ENCODE measurements at regions of chr2 and their contacts with region 1.

Region 1: DNA sequence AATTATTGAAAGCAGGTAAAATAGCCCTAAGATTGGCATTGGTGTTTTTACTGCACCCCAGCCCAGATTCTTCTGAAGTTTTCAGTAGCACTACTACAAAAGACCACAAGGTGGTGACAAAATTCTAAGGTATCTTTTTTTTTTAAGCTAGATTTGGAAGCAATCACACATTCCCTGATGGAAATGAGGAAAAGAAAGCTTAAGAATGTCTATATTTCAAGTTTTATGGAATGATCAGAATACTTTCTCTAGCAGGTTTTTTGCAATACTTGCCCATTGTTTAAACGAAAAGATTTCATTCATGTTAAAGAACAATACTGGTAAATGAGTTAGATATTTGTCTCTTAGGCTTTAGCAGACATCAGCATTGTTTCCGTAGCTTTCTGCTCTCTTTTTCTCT is 32.1 kb upstream of the ZNF638 start:
- DNase-seq: peak; percentile 51
- H3K4me3 ChIP-seq: no peak overlapping the region; a peak in 1 of 4 replicates
- H3K27ac ChIP-seq: no peak overlapping the region
- H3K4me1 ChIP-seq: no peaks in the 10 kb centered on the region
- H3K27me3 ChIP-seq: no peaks in the 10 kb centered on the region
- CTCF ChIP-seq: peak; percentile 78
- EP300 ChIP-seq: no peak
- RAD21 ChIP-seq: peak; percentile 79

Region 2: DNA sequence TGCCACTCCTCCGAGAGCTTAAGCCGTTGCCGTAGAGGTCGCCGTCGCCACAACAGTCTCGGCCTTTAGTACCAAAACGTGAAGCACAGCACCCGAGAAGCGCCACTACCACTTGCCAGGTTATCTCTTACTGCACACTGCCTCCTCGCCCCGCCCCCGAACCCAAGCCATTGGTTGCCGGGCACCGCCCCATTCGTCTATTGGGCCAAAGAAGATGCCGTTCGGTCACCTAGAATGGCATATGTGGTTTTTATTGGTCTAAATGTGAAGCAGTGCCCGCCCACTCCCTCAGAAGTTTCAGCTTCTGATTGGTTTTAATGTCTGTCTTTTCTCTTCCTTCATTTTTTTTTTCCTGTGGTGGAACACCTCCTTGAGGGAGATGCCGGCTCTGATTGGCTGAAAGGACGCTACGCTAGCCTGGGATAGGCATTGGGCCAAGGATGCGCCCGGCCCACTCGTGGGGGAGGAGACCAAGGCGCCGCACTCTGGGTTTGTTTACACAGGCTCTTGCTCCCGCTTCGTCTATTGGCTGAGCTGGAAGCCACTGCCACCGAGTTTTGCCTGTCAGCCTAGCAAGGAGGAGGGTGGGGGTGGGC is 72.4 kb before region 1 on chr2 and contains the start of gene PAIP2B:
- CTCF ChIA-PET with region 1: interaction called, 21 read pairs
- POLR2A ChIA-PET with region 1: no interaction called
- DNase-seq: peak; percentile 90
- H3K4me3 ChIP-seq: peak within 1 kb of the TSS; percentile 80 to 90
- H3K27ac ChIP-seq: peak within 1 kb of the TSS in 1 of 2 experiments; percentile 17; a peak in 1 of 4 replicates
- H3K4me1 ChIP-seq: peaks cover 0 to 4% of the 10 kb centered on the region in 2 experiments; a peak in 1 of 4 replicates
- H3K27me3 ChIP-seq: no peaks in the 10 kb centered on the region
- CTCF ChIP-seq: no peak
- EP300 ChIP-seq: no peak
- RAD21 ChIP-seq: no peak; the same call in 1 of the 2 replicates
- polyA plus RNA-seq, gene PAIP2B: 0.20 and 0.23 TPM in 2 replicates

Region 3: GRCh38 chr2:71282495-71282894 is 17.0 kb before region 1 on chr2:
- CTCF ChIA-PET with region 1: interaction called, 43 read pairs
- POLR2A ChIA-PET with region 1: no interaction called
- DNase-seq: no peak
- H3K4me3 ChIP-seq: no peak overlapping the region
- H3K27ac ChIP-seq: no peak overlapping the region
- H3K4me1 ChIP-seq: peaks cover 0 to 5% of the 10 kb centered on the region in 2 experiments; a peak in 2 of 4 replicates
- H3K27me3 ChIP-seq: no peaks in the 10 kb centered on the region
- CTCF ChIP-seq: peak; percentile 23; the same call in 1 of the 2 replicates
- EP300 ChIP-seq: no peak
- RAD21 ChIP-seq: peak; percentile 27; the same call in 1 of the 2 replicates

Region 4: DNA sequence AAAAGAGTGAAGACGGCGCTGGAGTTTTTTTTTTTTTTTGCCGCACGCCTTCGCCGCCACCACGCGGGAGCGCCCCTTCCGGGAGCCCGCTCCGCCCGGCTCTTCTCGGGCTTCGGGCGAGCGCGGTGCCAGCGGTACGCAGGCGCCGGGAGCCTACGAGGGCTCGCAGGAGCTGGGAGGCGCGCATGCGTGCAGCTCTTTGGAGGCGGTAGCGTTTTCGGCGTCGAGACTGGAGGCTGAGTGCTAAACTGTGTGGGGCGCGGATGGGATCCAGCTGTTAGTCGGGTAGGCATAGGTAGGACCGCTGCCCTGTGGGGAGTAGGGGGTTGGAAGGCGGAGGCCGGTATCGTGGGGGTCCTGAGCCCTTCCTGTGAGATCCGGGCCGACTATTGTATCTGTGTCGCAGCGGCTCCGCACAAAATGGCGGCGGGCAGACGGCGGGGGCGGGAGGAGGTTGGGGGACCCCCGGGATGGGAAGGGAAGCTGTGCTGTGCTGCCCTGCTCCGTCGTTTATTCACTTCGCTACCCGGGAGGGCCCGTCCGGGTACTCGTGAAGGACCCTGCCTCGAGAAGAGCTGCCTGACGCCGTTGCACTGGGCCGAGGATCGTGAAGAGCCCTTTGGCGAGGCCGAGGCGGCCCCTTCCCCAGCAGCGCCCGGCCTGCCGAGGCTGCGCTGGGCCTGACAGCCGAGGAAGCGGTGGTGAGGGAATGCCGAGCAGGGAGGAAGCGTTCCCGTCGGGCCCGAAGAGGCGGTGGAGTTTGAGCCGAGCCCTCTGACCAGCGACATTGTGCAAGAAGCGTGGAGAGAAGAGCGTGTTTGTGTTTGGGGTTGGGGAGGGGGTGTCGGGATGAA is 32.3 kb after region 1 on chr2 and contains the start of gene ZNF638:
- CTCF ChIA-PET with region 1: interaction called, 32 read pairs
- POLR2A ChIA-PET with region 1: interaction called, 3 read pairs
- DNase-seq: peak; percentile 97
- H3K4me3 ChIP-seq: peak within 1 kb of the TSS; percentile 91 to 94
- H3K27ac ChIP-seq: peak within 1 kb of the TSS; percentile 76 to 97
- H3K4me1 ChIP-seq: peaks cover 0 to 12% of the 10 kb centered on the region in 2 experiments; a peak in 3 of 4 replicates
- H3K27me3 ChIP-seq: no peaks in the 10 kb centered on the region
- CTCF ChIP-seq: peak; percentile 71
- EP300 ChIP-seq: no peak
- RAD21 ChIP-seq: peak; percentile 50
- polyA plus RNA-seq, gene ZNF638: 28.1 and 32.2 TPM in 2 replicates

Region 5: GRCh38 chr2:71466303-71467173 is 167.0 kb after region 1 on chr2:
- CTCF ChIA-PET with region 1: interaction called, 13 read pairs
- POLR2A ChIA-PET with region 1: no interaction called
- DNase-seq: peak; percentile 85
- H3K4me3 ChIP-seq: peak overlapping the region; percentile 57 to 73
- H3K27ac ChIP-seq: no peak overlapping the region
- H3K4me1 ChIP-seq: peaks cover 3 to 4% of the 10 kb centered on the region in 2 experiments; a peak in 2 of 4 replicates
- H3K27me3 ChIP-seq: peaks cover 48% of the 10 kb centered on the region
- CTCF ChIP-seq: no peak
- EP300 ChIP-seq: no peak
- RAD21 ChIP-seq: no peak